HEK293 (cell line): ENCODE measurements at regions of chr3 and their contacts with region 1.

Region 1: GRCh38 chr3:14242490-14243311 is 64.1 kb downstream of the LSM3 start:
- H3K4me3 ChIP-seq: no peak overlapping the region
- H3K27ac ChIP-seq: no peak overlapping the region
- H3K4me1 ChIP-seq: no peaks in the 10 kb centered on the region
- CTCF ChIP-seq: no peak

Region 2: DNA sequence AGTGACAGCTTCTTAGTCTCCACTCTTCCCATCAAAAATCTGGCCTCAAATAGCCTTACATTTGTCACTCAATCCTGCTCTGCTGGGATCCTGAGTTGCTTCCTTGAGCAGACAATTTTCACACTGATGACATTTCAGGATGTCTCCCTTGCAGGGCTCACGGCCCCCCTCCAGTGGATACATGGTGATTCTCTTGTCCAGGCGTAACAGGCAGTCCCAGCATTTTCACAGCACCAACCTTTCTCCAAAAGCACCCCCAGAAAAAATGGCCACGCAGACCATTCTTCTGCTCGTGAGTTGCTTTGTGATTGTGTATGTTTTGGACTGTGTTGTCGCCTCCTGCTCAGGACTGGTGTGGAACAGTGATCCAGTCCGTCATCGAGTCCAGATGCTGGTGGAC is 315.4 kb before region 1 on chr3:
- CTCF ChIA-PET with region 1: no interaction called
- POLR2A ChIA-PET with region 1: no interaction called
- H3K4me3 ChIP-seq: no peak overlapping the region
- H3K27ac ChIP-seq: no peak overlapping the region
- H3K4me1 ChIP-seq: no peaks in the 10 kb centered on the region
- CTCF ChIP-seq: peak; percentile 40; the same call in 1 of the 2 replicates

Region 3: DNA sequence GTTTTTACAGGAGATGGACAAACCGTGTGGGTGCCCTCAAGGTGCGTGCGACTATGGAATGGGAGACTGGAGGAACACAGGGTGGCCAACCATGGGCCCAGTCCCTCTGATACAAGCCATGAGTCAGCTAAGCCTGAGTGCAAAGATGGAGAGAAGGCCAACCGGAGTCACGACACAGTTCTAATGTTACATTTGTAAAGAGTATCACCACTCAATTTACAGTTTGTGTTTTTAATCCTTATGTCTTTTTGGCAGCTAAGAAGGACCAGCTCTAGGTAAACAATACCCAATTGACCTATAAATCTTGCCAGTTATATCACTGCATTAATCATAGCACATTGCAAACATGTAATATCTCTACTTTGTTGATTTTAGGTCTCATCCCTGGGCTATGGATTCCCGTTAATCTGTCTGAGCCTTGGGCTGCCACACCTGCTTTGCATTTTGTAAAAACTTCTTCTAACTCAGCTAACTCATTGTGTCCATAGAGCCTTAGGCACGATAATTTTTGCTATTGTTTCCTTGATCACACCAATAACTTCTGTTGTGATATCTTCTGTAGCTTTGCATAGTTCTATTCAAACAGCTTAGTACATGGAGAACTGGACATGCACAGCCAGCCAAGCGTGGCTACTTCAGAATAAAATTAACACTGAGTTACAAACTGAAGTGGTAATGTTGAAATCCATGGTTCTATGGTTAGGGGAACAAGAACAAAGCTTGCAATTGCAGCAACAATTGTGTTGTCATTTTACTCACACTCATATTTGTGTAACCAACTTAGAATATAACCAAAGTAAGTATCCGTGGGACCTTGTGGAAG is 13.8 kb before region 1 on chr3:
- CTCF ChIA-PET with region 1: no interaction called
- POLR2A ChIA-PET with region 1: no interaction called
- H3K4me3 ChIP-seq: no peak overlapping the region
- H3K27ac ChIP-seq: no peak overlapping the region
- H3K4me1 ChIP-seq: no peaks in the 10 kb centered on the region
- CTCF ChIP-seq: no peak

Region 4: DNA sequence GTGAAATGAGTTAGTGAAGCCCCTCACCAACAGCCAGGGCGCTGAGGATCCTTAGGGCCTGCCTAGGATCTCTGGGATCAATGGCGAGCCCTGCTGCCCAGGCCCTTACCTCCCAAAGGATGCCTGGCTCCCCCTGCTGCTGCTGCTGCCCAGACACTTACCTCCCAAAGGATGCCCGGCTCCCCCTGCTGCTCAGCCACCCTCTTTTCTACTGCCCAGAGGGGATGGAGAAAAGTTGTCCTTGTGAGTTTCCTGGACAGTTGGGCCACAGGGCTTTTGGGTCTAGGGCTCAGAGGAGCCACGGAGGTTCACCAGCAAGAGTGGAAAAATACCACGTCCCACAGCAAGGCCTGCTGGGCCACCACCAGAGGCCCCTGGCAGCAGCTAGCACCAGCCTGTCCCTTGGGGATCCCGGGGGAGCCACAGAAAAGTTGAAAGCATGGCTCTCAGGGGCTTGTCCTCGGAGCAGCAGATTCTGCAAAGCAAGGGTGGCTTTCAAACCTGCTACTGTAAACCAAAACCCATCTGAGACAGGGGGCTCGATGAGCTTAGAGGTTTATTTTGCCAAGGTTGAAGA is 219.1 kb after region 1 on chr3:
- CTCF ChIA-PET with region 1: interaction called, 12 read pairs
- POLR2A ChIA-PET with region 1: no interaction called
- H3K4me3 ChIP-seq: no peak overlapping the region
- H3K27ac ChIP-seq: no peak overlapping the region
- H3K4me1 ChIP-seq: no peaks in the 10 kb centered on the region; the same call in 1 of the 2 replicates
- CTCF ChIP-seq: peak; percentile 98